ENCODE measurements at regions of chr11 and their contacts with region 1.

Region 1: DNA sequence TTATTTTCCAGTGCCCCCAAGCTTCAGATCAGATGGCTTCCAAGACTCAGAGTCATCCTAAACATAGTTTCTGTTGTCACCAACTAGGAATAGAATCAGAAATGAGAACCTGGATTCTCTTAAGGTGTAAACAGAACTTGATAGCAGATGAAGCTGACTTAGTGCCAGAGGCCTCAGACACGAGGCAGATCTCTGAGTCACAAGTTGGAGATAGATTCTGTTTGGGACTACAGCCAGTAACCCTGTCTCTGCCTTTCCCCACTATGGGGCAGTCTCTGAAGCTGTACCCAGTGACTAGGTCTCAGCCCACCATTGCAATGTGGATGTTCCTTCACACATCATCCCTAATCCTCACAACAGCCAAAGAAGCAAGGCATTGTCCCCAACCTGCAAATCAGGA is 25.4 kb downstream of the NEU3 start:
- DNase-seq: peak; percentile 75 to 90
- ATAC-seq: peak; percentile 95
- H3K4me3 ChIP-seq: no peak overlapping the region
- H3K27ac ChIP-seq: peak overlapping the region; percentile 89 to 97 (median 92)
- H3K4me1 ChIP-seq: peaks cover 62 to 63% of the 10 kb centered on the region in 2 donors
- H3K27me3 ChIP-seq: no peaks in the 10 kb centered on the region
- CTCF ChIP-seq: peak in 1 of 5 experiments; percentile 16
- POLR2A ChIP-seq: no peak

Region 2: GRCh38 chr11:74988541-74989260 is 25.4 kb before region 1 on chr11 and contains the start of gene NEU3:
- in situ Hi-C with region 1: no loop called
- intact Hi-C with region 1: loop called (anchors 2 kb)
- DNase-seq: peak; percentile 77 to 78
- ATAC-seq: peak; percentile 89 to 91
- H3K4me3 ChIP-seq: peak within 1 kb of the TSS; percentile 66 to 95 (median 91)
- H3K27ac ChIP-seq: peak within 1 kb of the TSS; percentile 88 to 96 (median 96)
- H3K4me1 ChIP-seq: peaks cover 42 to 45% of the 10 kb centered on the region in 2 donors
- H3K27me3 ChIP-seq: no peaks in the 10 kb centered on the region
- CTCF ChIP-seq: no peak
- POLR2A ChIP-seq: peak; percentile 77 to 80
- total RNA-seq, gene NEU3: 11.0 to 20.6 (median 18.3) TPM

Measured in gastrocnemius medialis (tissue), 4 donors.